PC-9 (cell line): ENCODE measurements at regions of chr2 and their contacts with region 1.

Region 1: DNA sequence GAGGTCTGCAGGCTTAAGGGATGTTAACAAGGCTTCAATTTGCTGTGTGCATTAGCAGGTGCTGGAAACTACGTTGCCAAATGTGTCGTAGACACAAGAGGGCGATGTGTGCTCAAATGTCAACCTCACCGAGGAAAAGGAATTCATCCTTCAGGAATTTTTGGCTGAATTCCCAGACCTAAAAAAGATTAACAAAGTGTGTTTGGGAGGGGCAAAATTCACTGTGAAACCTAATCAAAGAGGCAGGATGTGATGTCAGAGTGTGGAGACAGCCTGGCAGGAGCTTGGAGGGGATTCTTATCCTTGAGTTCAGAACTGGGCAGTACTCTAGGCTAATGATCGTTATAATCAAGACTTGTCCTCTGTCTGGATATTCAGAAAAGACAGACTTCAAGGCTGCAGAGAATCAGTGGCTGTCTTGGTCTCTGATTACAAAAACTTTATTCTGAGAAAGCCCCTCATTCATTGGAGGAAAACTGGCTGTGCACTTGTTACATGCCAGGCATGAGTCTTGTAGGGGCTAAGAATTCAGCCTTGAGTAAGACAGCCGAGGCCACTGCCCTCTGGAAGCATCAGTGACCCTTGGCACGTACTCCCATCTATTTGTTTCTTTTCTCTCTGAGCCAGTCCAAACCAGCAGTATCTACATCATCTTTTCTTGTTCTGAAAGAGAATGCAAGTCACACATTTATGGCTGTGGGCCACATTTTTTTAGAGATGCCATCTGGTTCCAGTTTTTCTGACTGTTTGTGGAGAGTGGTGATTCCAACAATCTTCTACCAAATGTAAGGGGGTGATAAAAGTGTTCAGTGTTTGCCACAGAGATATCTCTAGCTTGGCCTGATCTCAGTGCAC is 18.7 kb upstream of the SCYGR1 start:
- DNase-seq: peak; percentile 72 to 95
- H3K4me3 ChIP-seq: no peak overlapping the region
- H3K27ac ChIP-seq: peak overlapping the region; percentile 84
- H3K4me1 ChIP-seq: peaks cover 57% of the 10 kb centered on the region
- H3K27me3 ChIP-seq: no peaks in the 10 kb centered on the region
- CTCF ChIP-seq: peak; percentile 82

Region 2: DNA sequence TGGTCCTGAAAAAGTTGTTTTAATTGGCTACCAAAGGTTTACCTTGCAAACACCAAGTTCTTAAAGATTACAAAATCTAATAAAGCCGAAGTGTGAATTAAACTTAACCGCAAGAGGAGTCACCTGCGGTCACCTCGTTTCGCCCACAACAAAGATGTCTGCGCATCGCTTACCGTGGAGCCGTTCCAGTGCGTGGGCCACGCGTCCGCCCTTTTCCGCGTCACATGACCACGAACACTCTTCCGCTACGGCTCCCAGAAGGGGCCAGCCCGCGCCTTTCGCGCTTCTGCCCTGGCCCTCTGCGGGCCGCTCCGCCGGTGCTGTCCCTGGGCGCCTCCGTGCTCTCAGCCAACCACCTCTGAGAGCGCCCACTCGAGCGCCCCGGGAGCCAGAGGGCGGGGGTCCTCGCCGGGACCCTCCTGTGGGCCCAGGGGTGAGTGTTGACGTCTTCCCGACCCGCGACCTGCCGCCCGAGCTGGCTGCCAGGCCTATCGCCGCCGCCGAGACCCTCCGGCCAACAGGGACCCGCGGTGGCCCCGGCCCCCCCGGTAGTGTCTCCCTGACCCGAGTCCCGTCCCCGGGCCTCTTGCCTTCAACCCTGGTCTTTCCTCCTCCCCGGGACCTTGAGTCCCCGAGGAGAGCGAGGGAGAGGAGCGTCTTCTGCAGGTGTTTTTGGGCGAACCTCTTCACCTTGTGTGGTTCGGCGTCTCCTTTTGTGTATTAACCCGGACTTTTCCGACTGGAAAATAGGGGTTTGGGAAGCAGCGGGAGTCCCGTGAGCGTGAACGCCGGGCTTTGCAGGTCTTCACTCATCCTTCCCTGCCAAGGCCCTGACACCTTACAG is 81.2 kb before region 1 on chr2 and contains the start of gene MFF:
- CTCF ChIA-PET with region 1: interaction called, 15 read pairs
- POLR2A ChIA-PET with region 1: interaction called, 10 read pairs
- intact Hi-C with region 1: no loop called
- DNase-seq: peak; percentile 80 to 86
- H3K4me3 ChIP-seq: peak within 1 kb of the TSS; percentile 98
- H3K27ac ChIP-seq: peak within 1 kb of the TSS; percentile 83
- H3K4me1 ChIP-seq: peaks cover 25% of the 10 kb centered on the region
- H3K27me3 ChIP-seq: no peaks in the 10 kb centered on the region
- CTCF ChIP-seq: peak; percentile 43; the same call in 1 of the 2 replicates
- total RNA-seq, gene MFF: 141 and 144 TPM in 2 replicates

Region 3: DNA sequence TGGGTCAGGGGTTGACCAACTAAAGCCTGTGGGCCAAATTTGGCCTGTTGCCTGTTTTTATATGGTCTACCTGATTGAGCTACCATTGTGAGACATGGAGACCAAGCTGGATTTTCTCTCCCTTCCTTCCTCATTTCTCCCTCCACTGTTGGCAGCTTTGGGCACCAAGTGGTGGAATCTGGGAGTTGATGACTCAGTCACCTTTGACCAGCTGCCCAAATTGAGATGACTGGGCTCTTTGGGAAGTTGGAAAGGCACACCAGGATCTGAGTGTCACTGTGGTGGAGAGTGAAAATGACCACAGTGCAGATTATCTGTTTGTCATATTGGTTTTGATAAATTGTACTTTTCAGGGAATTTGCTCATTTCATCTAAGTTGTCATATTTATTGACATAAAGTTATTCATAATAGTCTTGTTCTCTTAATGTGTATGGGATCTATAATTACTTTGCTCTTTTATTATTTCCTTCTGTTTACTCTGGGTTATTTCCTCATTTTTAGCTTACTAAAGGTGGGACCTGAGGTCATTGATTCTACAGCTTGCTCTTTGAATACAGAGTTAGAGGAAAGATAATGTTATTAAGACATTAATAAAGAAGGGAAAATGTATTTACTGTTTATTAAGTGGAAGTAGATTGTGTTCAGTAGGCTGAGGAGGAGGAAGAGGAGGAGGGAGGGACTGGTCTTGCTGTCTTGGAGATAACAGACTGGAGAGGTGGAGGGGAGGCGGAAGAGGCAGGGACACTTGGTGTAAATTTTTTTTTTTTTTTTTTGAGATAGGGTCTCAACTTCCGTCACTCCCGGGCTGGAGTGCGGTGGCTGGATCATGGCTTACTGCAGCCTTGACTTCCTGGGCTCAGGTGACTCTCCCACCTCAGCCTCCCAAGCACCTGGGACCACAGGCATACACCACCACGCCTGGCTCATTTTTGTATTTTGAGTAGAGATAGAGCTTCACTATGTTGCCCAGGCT is 97.3 kb after region 1 on chr2:
- CTCF ChIA-PET with region 1: interaction called, 3 read pairs
- POLR2A ChIA-PET with region 1: no interaction called
- intact Hi-C with region 1: loop called (anchors 2 kb)
- DNase-seq: peak; percentile 77 to 94
- H3K4me3 ChIP-seq: peak overlapping the region; percentile 21; the same call in 1 of the 2 replicates
- H3K27ac ChIP-seq: peak overlapping the region; percentile 90
- H3K4me1 ChIP-seq: peaks cover 72% of the 10 kb centered on the region
- H3K27me3 ChIP-seq: no peaks in the 10 kb centered on the region
- CTCF ChIP-seq: no peak

Region 4: GRCh38 chr2:227703280-227703732 is 296.9 kb after region 1 on chr2:
- CTCF ChIA-PET with region 1: interaction called, 3 read pairs
- POLR2A ChIA-PET with region 1: interaction called, 5 read pairs
- intact Hi-C with region 1: loop called (anchors 5 kb)
- DNase-seq: peak; percentile 75 to 94
- H3K4me3 ChIP-seq: peak overlapping the region; percentile 41
- H3K27ac ChIP-seq: peak overlapping the region; percentile 92
- H3K4me1 ChIP-seq: peaks cover 37% of the 10 kb centered on the region
- H3K27me3 ChIP-seq: no peaks in the 10 kb centered on the region
- CTCF ChIP-seq: no peak

Region 5: DNA sequence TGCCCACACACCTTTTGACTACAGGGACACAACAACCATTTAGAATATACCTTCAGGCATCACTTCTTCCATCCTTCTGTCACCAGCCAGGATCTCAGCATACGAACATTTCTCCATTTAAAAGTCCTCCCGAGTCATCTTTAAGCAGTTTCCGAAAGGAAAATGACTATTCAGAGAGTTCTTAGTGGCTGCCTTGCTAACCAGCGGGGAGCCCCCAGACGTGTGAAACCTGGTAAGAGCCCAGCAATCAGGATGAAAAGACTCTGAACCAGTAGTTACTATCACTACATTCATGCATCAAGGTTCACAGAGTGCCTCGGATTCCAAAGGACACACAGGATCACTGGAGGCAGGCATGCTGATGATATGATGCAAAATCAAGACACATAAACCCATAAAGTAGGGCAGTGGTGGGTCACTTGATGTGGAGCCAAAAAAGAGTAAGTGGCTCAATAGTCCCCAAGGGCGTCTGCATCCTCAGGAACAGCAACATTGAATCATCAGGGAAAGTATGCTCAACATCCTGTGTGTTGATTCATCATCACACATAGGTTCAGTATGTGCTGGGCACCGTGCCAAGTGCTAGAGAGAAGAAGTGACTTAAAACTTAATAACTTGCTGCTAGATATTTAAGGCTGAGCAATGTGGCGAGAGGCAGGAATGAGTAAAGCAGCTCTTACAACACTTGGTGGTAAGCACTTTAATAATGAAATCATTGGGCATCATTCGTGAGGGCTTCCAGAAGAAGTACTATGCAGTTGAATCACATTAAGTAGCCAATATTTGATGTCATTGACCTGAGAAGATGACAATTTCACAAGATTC is 411.7 kb after region 1 on chr2:
- CTCF ChIA-PET with region 1: no interaction called
- POLR2A ChIA-PET with region 1: no interaction called
- intact Hi-C with region 1: loop called (anchors 1 kb)
- DNase-seq: peak; percentile 92 to 100
- H3K4me3 ChIP-seq: peak overlapping the region; percentile 55
- H3K27ac ChIP-seq: peak overlapping the region; percentile 98
- H3K4me1 ChIP-seq: peaks cover 56% of the 10 kb centered on the region
- H3K27me3 ChIP-seq: no peaks in the 10 kb centered on the region
- CTCF ChIP-seq: no peak

Region 6: DNA sequence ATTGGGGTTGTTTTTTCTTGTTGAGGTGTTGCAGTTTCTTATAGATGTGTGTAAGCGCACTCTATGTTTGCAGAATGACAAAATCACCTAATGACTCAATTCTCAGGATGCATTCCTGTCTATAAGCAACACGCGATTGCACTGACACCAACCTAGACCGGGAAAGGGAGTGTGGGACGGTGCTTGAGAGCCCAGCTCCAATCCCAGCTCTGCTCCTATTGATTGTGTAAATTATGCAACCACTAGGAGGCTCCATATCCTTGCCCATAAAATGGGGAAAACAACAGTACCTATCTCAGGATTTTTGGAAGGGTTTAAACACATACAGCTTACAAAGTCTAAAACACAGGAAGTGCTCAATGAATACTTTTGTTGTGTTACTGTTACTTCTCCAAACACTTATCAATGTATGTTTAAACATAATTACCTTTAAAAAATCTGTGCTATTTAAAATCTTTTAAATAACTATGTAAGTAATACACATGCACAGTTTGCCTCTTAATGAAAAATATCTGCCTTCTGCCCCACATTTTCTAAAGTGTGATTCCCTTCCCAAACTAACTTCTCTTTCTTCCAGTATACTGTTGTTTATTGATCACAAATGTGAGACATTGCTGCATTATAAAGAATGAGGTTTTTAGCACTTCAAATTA is 642.6 kb after region 1 on chr2:
- CTCF ChIA-PET with region 1: no interaction called
- POLR2A ChIA-PET with region 1: no interaction called
- intact Hi-C with region 1: loop called (anchors 10 kb)
- DNase-seq: peak; percentile 30 to 70
- H3K4me3 ChIP-seq: no peak overlapping the region
- H3K27ac ChIP-seq: no peak overlapping the region
- H3K4me1 ChIP-seq: peaks cover 12% of the 10 kb centered on the region
- H3K27me3 ChIP-seq: no peaks in the 10 kb centered on the region
- CTCF ChIP-seq: peak; percentile 67